B cell (primary cell): ENCODE measurements at regions of chr1 and their contacts with region 1.

Region 1: DNA sequence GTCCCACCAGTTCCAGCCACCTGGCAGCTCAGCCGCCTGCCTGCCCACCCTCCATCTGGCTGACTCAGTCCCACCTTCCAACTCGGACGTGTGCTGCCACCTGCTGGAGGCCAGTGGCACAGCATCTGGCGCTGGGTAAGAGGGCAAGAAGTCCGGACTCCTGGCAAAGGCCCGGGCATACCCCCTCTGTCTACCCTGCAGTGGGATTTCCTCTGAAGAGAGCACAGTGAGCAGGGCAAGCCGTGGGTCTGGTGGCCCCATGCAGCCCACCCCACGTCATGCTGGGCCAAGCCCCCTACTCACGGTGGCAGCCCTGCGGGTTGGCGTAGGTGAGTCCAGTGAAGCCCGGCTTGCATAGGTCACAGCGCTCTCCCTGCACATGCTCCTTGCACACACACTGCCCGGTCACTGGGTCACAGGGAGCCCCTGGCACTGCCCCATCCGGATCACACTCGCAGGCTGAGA is 24.5 kb downstream of the LAMB3 start:
- DNase-seq: peak; percentile 69
- ATAC-seq: peak; percentile 84
- H3K4me3 ChIP-seq: no peak overlapping the region
- H3K4me3 Mint-ChIP-seq: no peak overlapping the region
- H3K27ac ChIP-seq: no peak overlapping the region
- H3K27ac Mint-ChIP-seq: peak overlapping the region; percentile 2
- H3K4me1 ChIP-seq: no peaks in the 10 kb centered on the region
- H3K4me1 Mint-ChIP-seq: peaks cover 3% of the 10 kb centered on the region
- H3K27me3 ChIP-seq: peaks cover 0 to 7% (median 2%) of the 10 kb centered on the region in 4 experiments
- H3K27me3 Mint-ChIP-seq: peaks cover 9% of the 10 kb centered on the region
- CTCF ChIP-seq: peak; percentile 96

Region 2: DNA sequence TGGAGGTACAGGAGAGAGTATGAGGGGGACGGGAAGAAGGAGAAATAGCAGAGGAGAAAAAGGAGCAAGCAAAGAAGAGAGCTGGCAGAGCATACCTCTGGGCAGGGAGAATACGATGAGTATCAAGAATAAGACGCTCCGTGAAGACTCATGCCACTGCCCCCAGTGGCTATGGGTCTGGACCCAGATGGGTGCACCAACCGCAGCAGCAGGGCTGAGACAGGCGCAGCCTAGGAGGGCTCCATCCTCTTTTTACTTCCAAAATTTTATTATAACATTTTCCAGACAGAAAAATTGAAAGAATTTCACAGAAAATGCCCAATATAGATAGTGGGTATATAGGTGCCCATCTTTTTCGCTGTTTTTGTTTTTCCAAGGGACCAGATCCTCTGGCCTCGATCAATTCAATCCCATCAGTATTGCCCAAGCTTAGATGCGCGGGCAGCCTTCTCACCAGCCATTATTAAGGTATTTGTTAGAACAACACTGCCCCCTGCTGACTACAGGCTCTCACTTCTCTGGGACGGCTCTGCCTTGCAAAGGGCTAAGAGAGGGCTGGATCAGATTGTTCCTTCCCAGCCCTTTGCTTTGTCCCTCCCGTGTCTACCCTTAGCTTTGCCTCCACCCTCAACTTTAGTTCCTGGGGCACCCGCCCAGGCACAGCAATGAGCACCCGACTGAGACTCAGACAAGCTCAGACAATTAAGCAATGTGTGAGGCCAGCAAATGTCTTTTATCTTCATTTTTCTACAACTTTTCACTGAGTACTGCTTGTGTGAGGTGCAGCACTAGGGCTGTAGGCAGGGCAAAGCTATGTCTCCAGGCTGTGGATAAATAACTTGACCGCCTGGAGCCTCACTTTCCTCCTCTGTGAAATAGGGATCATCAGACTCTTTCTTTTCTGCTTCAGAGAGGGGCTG is 61.7 kb before region 1 on chr1:
- CTCF ChIA-PET with region 1: interaction called, 6 read pairs
- POLR2A ChIA-PET with region 1: no interaction called
- intact Hi-C with region 1: loop called (anchors 1 kb)
- DNase-seq: peak; percentile 63
- ATAC-seq: no peak
- H3K4me3 ChIP-seq: no peak overlapping the region
- H3K4me3 Mint-ChIP-seq: no peak overlapping the region
- H3K27ac ChIP-seq: no peak overlapping the region
- H3K27ac Mint-ChIP-seq: no peak overlapping the region
- H3K4me1 ChIP-seq: peaks cover 4 to 5% of the 10 kb centered on the region in 2 donors
- H3K4me1 Mint-ChIP-seq: peaks cover 5% of the 10 kb centered on the region
- H3K27me3 ChIP-seq: peaks cover 0 to 20% (median 11%) of the 10 kb centered on the region in 4 experiments
- H3K27me3 Mint-ChIP-seq: peaks cover 39% of the 10 kb centered on the region
- CTCF ChIP-seq: peak; percentile 75

Region 3: GRCh38 chr1:209576798-209577197 is 51.0 kb before region 1 on chr1:
- CTCF ChIA-PET with region 1: interaction called, 3 read pairs
- POLR2A ChIA-PET with region 1: no interaction called
- intact Hi-C with region 1: loop called (anchors 1 kb)
- DNase-seq: peak; percentile 56
- ATAC-seq: peak; percentile 51
- H3K4me3 ChIP-seq: no peak overlapping the region
- H3K4me3 Mint-ChIP-seq: no peak overlapping the region
- H3K27ac ChIP-seq: no peak overlapping the region
- H3K27ac Mint-ChIP-seq: no peak overlapping the region
- H3K4me1 ChIP-seq: no peaks in the 10 kb centered on the region
- H3K4me1 Mint-ChIP-seq: no peaks in the 10 kb centered on the region
- H3K27me3 ChIP-seq: peaks cover 0 to 2% (median 0%) of the 10 kb centered on the region in 4 experiments
- H3K27me3 Mint-ChIP-seq: peaks cover 31% of the 10 kb centered on the region
- CTCF ChIP-seq: peak; percentile 84

Region 4: DNA sequence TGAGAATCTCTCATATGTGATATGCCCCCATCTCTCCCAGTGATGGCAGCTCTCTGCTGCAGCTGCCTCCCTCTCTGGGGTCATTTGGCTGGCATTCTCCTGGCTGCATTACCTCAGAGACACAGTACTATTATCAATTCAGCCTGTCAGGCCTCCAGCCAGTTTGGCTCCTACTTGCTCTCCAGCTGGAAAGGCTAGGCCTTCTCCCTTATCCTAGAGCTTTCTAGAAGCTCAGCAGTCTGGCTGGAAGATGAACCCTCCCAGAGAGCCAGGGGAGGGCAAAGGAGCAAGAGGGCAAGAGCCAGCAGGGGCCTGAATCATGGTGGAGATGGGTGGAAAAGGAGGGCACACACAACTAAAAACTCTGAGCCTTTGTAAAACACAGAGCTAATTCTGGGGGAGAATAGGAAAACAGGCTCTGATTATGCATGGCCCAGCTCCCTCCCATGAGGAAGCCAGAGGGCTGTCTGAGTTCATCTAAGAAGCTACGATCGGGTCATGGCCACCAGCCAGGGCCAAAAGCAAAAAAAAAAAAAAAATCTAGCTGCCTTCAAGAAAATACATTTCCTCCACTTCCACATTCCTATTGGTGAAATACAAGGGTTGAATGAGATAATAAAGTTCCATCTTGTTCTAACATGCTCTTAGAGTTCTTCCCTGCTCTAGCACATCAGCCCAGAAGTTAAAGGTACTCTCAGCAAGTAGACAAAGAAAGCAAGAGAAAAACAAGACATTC is 15.7 kb after region 1 on chr1:
- CTCF ChIA-PET with region 1: interaction called, 10 read pairs
- POLR2A ChIA-PET with region 1: no interaction called
- intact Hi-C with region 1: no loop called
- DNase-seq: no peak
- ATAC-seq: no peak
- H3K4me3 ChIP-seq: no peak overlapping the region
- H3K4me3 Mint-ChIP-seq: no peak overlapping the region
- H3K27ac ChIP-seq: no peak overlapping the region
- H3K27ac Mint-ChIP-seq: no peak overlapping the region
- H3K4me1 ChIP-seq: no peaks in the 10 kb centered on the region
- H3K4me1 Mint-ChIP-seq: no peaks in the 10 kb centered on the region
- H3K27me3 ChIP-seq: no peaks in the 10 kb centered on the region
- H3K27me3 Mint-ChIP-seq: no peaks in the 10 kb centered on the region
- CTCF ChIP-seq: no peak